AG04450 (cell line): ENCODE measurements at regions of chr13 and their contacts with region 1.

Region 1: DNA sequence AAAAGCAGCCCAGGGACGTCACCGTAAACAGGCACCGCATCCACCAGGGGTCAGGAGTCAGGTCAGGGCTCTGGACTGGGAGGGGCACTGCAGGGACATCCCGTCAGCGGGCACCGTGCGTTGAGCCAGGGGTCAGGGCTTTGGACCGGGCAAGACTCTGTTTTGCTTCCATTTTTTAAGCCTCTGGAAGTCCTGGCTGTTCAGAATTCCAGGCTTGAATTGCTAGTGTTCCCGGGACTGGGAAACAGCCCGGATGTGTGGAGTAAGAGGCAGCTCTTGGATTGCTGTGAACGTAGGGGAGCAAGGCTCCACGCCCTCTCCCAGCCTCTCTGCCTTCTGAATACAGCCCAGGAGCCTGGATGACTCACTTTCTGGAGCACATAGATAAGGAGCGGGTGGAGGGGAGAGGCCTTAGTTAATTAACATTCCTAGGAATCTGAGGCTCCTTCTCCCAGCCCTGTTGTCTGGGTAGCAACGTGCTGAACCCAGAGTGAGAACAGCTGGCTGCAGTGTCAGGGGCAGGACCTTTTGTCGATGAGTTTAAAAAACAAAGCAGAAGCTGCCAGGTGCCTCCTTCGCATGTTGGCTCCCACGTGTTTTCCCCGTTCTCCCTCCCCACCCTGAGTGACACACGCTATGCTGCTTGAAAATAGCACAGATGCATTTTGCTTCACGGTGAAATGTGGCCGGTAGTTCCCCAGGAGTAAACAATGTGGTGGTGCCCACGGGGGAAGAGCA is 21.9 kb downstream of the ATP11A start:
- DNase-seq: peak; percentile 96
- H3K4me3 ChIP-seq: peak overlapping the region; percentile 55
- H3K27ac ChIP-seq: peak overlapping the region; percentile 95
- H3K27me3 ChIP-seq: no peaks in the 10 kb centered on the region
- CTCF ChIP-seq: peak; percentile 32

Region 2: DNA sequence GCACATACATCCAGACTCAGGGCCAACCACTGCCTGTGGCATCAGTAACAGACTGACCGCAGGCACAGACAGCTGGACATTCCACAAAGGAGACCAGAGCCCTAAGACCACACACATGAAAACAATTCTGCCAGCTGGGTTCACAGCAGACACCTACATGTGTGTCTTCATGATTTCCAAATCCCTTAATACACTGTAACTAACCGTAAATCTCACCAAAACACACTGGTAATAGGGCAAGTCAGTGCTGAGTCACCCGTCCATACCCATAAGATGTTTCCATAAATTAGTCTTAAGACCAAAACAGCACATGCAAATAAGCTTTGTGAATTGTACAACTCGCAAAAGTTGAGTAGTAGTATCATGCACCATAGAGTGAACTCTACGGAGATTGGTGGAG is 189.1 kb before region 1 on chr13:
- CTCF ChIA-PET with region 1: no interaction called
- POLR2A ChIA-PET with region 1: no interaction called
- DNase-seq: no peak
- H3K4me3 ChIP-seq: no peak overlapping the region
- H3K27ac ChIP-seq: no peak overlapping the region
- H3K27me3 ChIP-seq: no peaks in the 10 kb centered on the region
- CTCF ChIP-seq: no peak

Region 3: GRCh38 chr13:112617754-112618375 is 93.8 kb before region 1 on chr13:
- CTCF ChIA-PET with region 1: no interaction called
- POLR2A ChIA-PET with region 1: no interaction called
- DNase-seq: no peak
- H3K4me3 ChIP-seq: no peak overlapping the region
- H3K27ac ChIP-seq: no peak overlapping the region
- H3K27me3 ChIP-seq: peaks cover 31% of the 10 kb centered on the region
- CTCF ChIP-seq: no peak

Region 4: DNA sequence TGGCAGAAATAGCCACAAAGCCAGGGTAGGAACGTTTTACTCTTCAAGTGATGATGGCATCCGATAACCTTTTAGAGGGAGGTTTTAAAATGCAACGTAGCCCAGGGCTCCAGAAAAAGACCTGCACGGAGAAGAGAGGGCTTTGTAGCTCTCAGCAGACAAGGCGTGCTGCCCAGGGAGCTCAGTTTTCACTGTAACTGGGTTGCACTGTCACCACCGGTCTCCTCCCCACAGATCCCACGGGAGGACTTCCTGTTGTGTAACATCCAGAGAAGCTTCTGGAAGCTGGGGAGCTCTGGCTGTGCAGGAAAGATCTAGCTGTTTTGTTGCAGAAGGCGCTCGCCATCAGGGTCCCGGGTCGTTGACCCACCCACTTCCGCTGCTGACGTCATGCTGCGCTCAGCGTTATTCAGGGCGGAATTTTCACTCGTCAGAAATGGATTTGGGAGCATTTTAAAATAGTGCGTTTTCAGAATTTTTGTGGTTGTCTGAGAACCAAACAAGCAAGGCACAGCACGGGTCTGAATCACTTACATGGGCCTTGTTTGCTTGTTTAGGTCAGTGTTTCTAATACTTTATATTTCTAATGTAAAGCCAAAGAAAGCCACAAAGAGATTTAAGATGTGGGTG is 28.9 kb after region 1 on chr13:
- CTCF ChIA-PET with region 1: no interaction called
- POLR2A ChIA-PET with region 1: interaction called, 14 read pairs
- DNase-seq: peak; percentile 86
- H3K4me3 ChIP-seq: peak overlapping the region; percentile 29; the same call in 1 of the 2 replicates
- H3K27ac ChIP-seq: peak overlapping the region; percentile 97
- H3K27me3 ChIP-seq: no peaks in the 10 kb centered on the region
- CTCF ChIP-seq: no peak

Region 5: GRCh38 chr13:113875837-113876281 is 1164.2 kb after region 1 on chr13:
- CTCF ChIA-PET with region 1: no interaction called
- POLR2A ChIA-PET with region 1: no interaction called
- DNase-seq: no peak
- H3K4me3 ChIP-seq: no peak overlapping the region
- H3K27ac ChIP-seq: no peak overlapping the region
- H3K27me3 ChIP-seq: no peaks in the 10 kb centered on the region
- CTCF ChIP-seq: no peak